Lower leg skin (tissue), 4 donors: ENCODE measurements at regions of chr10 and their contacts with region 1.

Region 1: GRCh38 chr10:130757271-130757670 is 554.2 kb downstream of the TCERG1L start:
- DNase-seq: peak in 1 of 2 donors; percentile 52
- H3K4me3 ChIP-seq: no peak overlapping the region
- CTCF ChIP-seq: no peak
- POLR2A ChIP-seq: no peak

Region 2: DNA sequence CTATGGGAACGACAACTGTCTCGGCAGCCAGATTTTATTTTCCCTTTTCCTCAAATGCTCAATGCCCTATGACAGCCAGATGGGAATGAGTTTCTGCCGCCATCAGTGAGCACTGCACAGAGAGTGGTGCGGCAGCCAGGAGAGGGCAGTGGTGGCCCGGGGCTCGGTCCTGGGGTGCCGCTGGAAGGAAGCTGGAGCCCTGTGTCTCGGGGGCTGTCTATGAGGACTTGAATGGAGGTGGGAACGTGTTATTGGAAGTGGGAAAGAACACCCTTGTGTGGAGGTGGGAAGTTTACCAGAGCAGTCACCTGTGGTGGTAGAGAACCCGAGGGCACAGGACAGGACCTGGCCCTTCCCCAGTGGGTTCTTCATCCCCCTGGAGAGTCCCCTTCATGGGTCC is 1344.3 kb after region 1 on chr10:
- intact Hi-C with region 1: loop called (anchors 5 kb)
- DNase-seq: peak in 1 of 2 donors; percentile 76
- H3K4me3 ChIP-seq: no peak overlapping the region
- CTCF ChIP-seq: no peak
- POLR2A ChIP-seq: no peak